HepG2 (cell line): ENCODE measurements at regions of chr16 and their contacts with region 1.

Region 1: GRCh38 chr16:30091474-30092372 is at the start of gene TBX6:
- DNase-seq: peak; percentile 88
- ATAC-seq: peak; percentile 81
- H3K4me3 ChIP-seq: peak within 1 kb of the TSS; percentile 58 to 78 (median 67)
- H3K27ac ChIP-seq: peak within 1 kb of the TSS; percentile 72
- H3K4me1 ChIP-seq: peaks cover 74% of the 10 kb centered on the region
- H3K27me3 ChIP-seq: no peaks in the 10 kb centered on the region; a peak in 1 of 5 replicates
- CTCF ChIP-seq: peak; percentile 95
- EP300 ChIP-seq: no peak
- POLR2A ChIP-seq: peak; percentile 69 to 76
- RAD21 ChIP-seq: peak; percentile 95
- total RNA-seq, gene TBX6: 0.24 TPM in 1 of 2 replicates, not detected in the other

Region 2: DNA sequence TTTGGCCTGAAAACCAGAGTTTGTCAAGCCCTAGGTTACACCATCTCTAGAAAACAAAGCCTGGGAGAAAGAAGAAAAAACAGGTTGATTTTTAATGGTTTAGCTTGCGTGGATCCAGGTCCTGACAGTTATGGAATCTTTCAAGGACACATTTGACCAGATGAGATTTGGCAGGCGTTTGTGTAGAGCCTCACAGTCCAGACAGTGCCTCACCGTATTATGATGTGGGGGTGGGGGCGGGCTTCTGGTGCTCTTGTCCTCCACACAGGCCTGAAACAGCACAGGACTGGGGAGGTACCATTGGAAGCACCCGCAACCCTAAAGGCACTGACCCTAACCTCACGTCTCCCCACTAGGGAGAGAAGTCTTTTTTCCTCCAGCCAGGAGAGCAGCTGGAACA is 251.9 kb before region 1 on chr16:
- CTCF ChIA-PET with region 1: no interaction called
- POLR2A ChIA-PET with region 1: no interaction called
- in situ Hi-C with region 1: no loop called
- intact Hi-C with region 1: no loop called
- DNase-seq: no peak
- ATAC-seq: no peak
- H3K4me3 ChIP-seq: no peak overlapping the region
- H3K27ac ChIP-seq: no peak overlapping the region
- H3K4me1 ChIP-seq: no peaks in the 10 kb centered on the region
- H3K27me3 ChIP-seq: no peaks in the 10 kb centered on the region
- CTCF ChIP-seq: no peak
- EP300 ChIP-seq: no peak
- POLR2A ChIP-seq: no peak
- RAD21 ChIP-seq: no peak

Region 3: DNA sequence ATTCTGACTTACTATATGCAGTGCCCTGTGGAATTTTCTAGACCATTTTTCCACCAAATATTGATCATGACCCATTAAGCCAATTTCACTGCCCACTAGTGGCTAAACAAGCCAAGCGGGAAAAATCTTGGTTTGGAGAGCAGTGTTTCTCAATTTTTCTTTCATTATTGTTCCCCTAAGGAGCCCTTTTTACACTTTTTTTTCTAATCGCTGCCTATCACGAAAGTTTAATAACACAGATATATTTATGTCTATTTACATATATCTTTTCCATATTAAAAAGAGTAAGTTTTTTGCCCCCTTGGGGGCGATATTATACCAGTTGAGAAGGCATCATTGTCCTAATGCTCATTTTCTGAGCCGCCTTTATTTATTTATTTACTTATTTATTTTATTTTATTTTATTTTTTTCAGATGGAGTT is 49.9 kb before region 1 on chr16:
- CTCF ChIA-PET with region 1: interaction called, 8 read pairs
- POLR2A ChIA-PET with region 1: no interaction called
- in situ Hi-C with region 1: no loop called
- intact Hi-C with region 1: loop called (anchors 1 kb)
- DNase-seq: no peak
- ATAC-seq: no peak
- H3K4me3 ChIP-seq: no peak overlapping the region
- H3K27ac ChIP-seq: no peak overlapping the region
- H3K4me1 ChIP-seq: peaks cover 22% of the 10 kb centered on the region
- H3K27me3 ChIP-seq: peaks cover 0 to 20% of the 10 kb centered on the region in 2 experiments; a peak in 2 of 5 replicates
- CTCF ChIP-seq: peak; percentile 31; the same call in 1 of the 2 replicates
- EP300 ChIP-seq: no peak
- POLR2A ChIP-seq: no peak
- RAD21 ChIP-seq: no peak

Region 4: DNA sequence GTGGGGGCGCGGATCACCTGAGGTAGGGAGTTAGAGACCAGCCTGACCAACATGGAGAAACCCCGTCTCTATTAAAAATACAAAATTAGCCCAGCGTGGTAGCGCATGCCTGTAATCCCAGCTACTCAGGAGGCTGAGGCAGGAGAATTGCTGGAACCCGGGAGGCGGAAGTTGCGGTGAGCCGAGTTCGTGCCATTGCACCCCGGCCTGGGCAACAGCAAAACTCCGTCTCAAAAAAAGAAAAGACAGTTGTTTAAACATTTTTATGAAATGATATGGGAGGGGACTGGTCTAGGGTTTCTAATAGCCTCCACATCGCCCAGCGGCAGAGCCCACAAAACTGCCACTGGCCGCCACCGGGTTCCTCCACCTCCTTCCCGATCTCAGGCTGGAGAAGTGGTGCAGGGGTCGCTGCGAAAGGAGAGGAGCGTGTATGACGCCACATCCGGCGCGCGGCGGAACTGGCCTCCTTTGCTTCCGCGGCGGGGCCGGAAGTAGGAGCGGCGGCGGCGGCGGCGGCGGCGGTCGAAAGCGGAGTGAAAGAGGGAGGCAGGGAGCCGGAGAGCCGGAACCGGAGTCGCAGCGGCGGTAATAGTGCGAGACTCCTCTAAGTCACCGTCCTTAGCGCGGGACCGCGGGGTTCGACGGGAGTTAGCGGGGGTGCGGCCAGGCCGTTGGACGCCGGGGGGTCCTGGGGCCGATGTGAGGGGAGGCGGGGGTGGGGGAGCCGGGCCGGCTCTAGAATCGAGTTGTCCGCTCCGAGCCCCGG is 16.0 kb before region 1 on chr16 and contains the start of gene PPP4C:
- CTCF ChIA-PET with region 1: no interaction called
- POLR2A ChIA-PET with region 1: interaction called, 120 read pairs
- in situ Hi-C with region 1: no loop called
- intact Hi-C with region 1: no loop called
- DNase-seq: peak; percentile 88
- ATAC-seq: peak; percentile 90
- H3K4me3 ChIP-seq: peak within 1 kb of the TSS; percentile 81 to 98 (median 90)
- H3K27ac ChIP-seq: peak within 1 kb of the TSS; percentile 82
- H3K4me1 ChIP-seq: peaks cover 66% of the 10 kb centered on the region
- H3K27me3 ChIP-seq: no peaks in the 10 kb centered on the region; a peak in 1 of 5 replicates
- CTCF ChIP-seq: peak; percentile 51
- EP300 ChIP-seq: peak in 1 of 2 experiments; percentile 9; a peak in 1 of 4 replicates
- POLR2A ChIP-seq: peak; percentile 94 to 97
- RAD21 ChIP-seq: 0 out of 2 replicates have a peak, but pooled peaks have one; percentile 28
- total RNA-seq, gene PPP4C: 176 and 177 TPM in 2 replicates

Region 5: DNA sequence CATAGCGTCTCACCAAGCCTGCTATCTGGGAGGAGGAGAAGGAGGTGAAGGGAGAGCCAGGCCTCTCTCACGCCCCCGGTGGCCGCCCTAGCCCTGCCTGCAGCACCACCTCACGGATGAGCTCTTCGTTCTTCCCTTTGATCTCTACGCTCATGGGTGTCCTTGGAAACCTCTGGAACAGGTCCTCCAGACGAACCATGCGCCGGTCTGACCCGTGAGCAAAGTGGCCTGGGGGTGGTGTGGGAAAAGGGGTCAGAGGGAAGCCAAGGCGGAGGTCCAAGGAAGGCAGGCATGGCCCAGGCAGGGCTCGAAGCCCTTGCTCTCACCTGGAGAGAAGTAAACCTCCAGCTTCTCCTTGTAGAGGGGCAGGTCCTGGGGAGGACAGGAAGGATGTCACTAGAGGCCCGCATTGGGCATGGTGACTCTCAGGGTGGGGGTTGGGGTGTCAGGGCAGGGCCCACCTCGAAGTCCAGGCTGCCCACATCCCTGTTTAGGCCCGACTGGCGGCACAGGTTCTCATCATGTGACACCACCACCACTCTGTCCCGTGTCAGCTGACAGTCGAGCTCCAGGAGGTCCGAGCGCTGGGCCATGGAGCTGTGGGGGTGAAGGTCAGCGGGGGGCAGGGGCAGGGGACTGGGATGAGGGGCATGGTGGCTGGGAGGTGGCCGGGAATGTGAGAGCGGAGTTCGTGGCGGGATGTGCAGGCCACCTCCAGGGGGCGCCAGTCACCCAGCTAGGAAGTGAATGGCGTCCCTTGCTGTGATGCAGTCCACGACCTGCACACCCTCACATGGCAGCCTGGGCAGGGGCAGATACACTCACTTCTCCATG is 20.7 kb after region 1 on chr16:
- CTCF ChIA-PET with region 1: interaction called, 19 read pairs
- POLR2A ChIA-PET with region 1: interaction called, 42 read pairs
- in situ Hi-C with region 1: no loop called
- intact Hi-C with region 1: no loop called
- DNase-seq: peak; percentile 83
- ATAC-seq: peak; percentile 87
- H3K4me3 ChIP-seq: peak overlapping the region; percentile 23 to 65 (median 27)
- H3K27ac ChIP-seq: peak overlapping the region; percentile 70
- H3K4me1 ChIP-seq: peaks cover 30% of the 10 kb centered on the region
- H3K27me3 ChIP-seq: no peaks in the 10 kb centered on the region
- CTCF ChIP-seq: peak; percentile 99
- EP300 ChIP-seq: peak in 1 of 2 experiments; percentile 21; a peak in 1 of 4 replicates
- POLR2A ChIP-seq: peak; percentile 21 to 47; a peak in 1 of 4 replicates
- RAD21 ChIP-seq: peak; percentile 99

Region 6: GRCh38 chr16:30139583-30140481 is 48.1 kb after region 1 on chr16:
- CTCF ChIA-PET with region 1: no interaction called
- POLR2A ChIA-PET with region 1: interaction called, 16 read pairs
- in situ Hi-C with region 1: no loop called
- intact Hi-C with region 1: no loop called
- DNase-seq: peak; percentile 98
- ATAC-seq: peak; percentile 96
- H3K4me3 ChIP-seq: peak overlapping the region; percentile 1 to 25 (median 8); a peak in 2 of 6 replicates
- H3K27ac ChIP-seq: peak overlapping the region; percentile 85
- H3K4me1 ChIP-seq: peaks cover 90% of the 10 kb centered on the region
- H3K27me3 ChIP-seq: no peaks in the 10 kb centered on the region
- CTCF ChIP-seq: peak; percentile 33
- EP300 ChIP-seq: peak; percentile 64 to 92; a peak in 3 of 4 replicates
- POLR2A ChIP-seq: peak; percentile 50; a peak in 3 of 4 replicates
- RAD21 ChIP-seq: 0 out of 2 replicates have a peak, but pooled peaks have one; percentile 25

Region 7: GRCh38 chr16:30482366-30482765 is 390.6 kb after region 1 on chr16:
- CTCF ChIA-PET with region 1: no interaction called
- POLR2A ChIA-PET with region 1: no interaction called
- in situ Hi-C with region 1: no loop called
- intact Hi-C with region 1: no loop called
- DNase-seq: no peak
- ATAC-seq: peak; percentile 55
- H3K4me3 ChIP-seq: no peak overlapping the region
- H3K27ac ChIP-seq: no peak overlapping the region
- H3K4me1 ChIP-seq: peaks cover 22% of the 10 kb centered on the region
- H3K27me3 ChIP-seq: peaks cover 0 to 4% of the 10 kb centered on the region in 2 experiments; a peak in 1 of 5 replicates
- CTCF ChIP-seq: no peak
- EP300 ChIP-seq: no peak
- POLR2A ChIP-seq: no peak
- RAD21 ChIP-seq: 0 out of 2 replicates have a peak, but pooled peaks have one; percentile 24